Breast epithelium (tissue), 4 donors: ENCODE measurements at regions of chr15 and their contacts with region 1.

Region 1: GRCh38 chr15:59116141-59116540 is 11.2 kb downstream of the CCNB2 start:
- DNase-seq: no peak
- H3K4me3 ChIP-seq: no peak overlapping the region
- H3K27ac ChIP-seq: no peak overlapping the region
- H3K4me1 ChIP-seq: no peaks in the 10 kb centered on the region
- H3K27me3 ChIP-seq: no peaks in the 10 kb centered on the region
- CTCF ChIP-seq: no peak
- POLR2A ChIP-seq: no peak

Region 2: DNA sequence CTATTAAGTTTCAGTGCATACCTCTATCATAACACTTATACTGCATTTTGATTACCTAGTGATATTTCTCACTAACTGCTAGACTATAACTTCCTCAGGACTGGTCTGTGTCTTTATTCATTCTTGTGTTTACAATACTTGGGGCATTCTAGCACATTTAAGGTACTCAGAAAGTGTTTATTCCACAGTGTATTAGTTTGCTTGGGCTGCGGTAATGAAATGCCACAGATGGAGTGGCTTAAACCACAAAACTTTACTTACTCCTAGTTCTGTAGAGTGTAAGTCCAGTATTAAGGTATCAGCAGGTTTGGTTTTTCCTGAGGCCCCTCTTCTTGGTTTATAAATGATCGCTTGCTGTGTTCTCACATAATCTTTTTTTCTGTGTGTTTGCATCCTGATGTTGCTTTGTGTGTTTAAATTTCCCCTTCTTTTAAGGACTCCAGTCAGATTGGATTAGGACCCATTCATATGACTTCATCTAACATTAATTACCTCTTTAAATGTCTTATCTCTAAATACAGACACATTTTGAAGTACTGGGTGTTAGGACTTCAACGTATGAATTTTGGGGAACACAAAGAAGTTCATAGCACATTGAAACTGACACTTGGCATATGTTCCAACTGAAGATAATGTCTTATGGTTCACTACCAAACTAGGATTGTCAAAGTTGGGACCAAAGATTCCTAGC is 104.7 kb before region 1 on chr15:
- intact Hi-C with region 1: no loop called
- DNase-seq: no peak
- H3K4me3 ChIP-seq: no peak overlapping the region
- H3K27ac ChIP-seq: no peak overlapping the region
- H3K4me1 ChIP-seq: no peaks in the 10 kb centered on the region
- H3K27me3 ChIP-seq: no peaks in the 10 kb centered on the region
- CTCF ChIP-seq: no peak
- POLR2A ChIP-seq: no peak

Region 3: GRCh38 chr15:59104912-59105732 is 11.0 kb before region 1 on chr15 and contains the start of gene CCNB2:
- intact Hi-C with region 1: loop called (anchors 1 kb)
- DNase-seq: peak; percentile 80 to 81
- H3K4me3 ChIP-seq: peak within 1 kb of the TSS; percentile 51 to 70 (median 61)
- H3K27ac ChIP-seq: peak within 1 kb of the TSS in 1 of 2 donors; percentile 43
- H3K4me1 ChIP-seq: no peaks in the 10 kb centered on the region
- H3K27me3 ChIP-seq: no peaks in the 10 kb centered on the region
- CTCF ChIP-seq: no peak
- POLR2A ChIP-seq: no peak
- total RNA-seq, gene CCNB2: 0.29 to 3.5 (median 0.98) TPM

Region 4: GRCh38 chr15:59174835-59175831 is 59.0 kb after region 1 on chr15:
- intact Hi-C with region 1: no loop called
- DNase-seq: no peak
- H3K4me3 ChIP-seq: no peak overlapping the region
- H3K27ac ChIP-seq: peak overlapping the region; percentile 60 to 75
- H3K4me1 ChIP-seq: peaks cover 5 to 18% of the 10 kb centered on the region in 2 donors
- H3K27me3 ChIP-seq: no peaks in the 10 kb centered on the region
- CTCF ChIP-seq: peak in 2 of 3 donors; percentile 41 to 47
- POLR2A ChIP-seq: no peak

Region 5: DNA sequence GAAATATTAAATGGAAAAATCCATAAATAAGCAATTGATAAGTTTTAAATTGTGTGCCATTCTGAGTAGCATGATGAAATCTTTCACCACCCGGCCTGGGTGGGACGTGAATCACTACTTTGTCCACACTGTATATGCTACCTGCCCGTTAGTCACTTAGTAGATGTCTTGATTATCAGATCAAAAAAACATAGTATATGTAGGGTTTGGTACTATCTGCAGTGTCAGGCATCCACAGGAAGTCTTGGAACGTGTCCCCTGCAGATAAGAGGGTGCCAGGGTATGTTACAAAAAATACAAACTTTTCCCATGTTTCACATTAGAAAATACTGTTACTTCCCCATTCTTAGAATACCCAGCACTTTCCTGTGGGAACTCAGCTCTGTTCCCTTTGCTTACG is 357.1 kb after region 1 on chr15:
- intact Hi-C with region 1: no loop called
- DNase-seq: no peak
- H3K4me3 ChIP-seq: no peak overlapping the region
- H3K27ac ChIP-seq: no peak overlapping the region
- H3K4me1 ChIP-seq: no peaks in the 10 kb centered on the region
- H3K27me3 ChIP-seq: no peaks in the 10 kb centered on the region
- CTCF ChIP-seq: no peak
- POLR2A ChIP-seq: no peak